Activated B cell treated with CpG ODN at 0.5 μM for 24 hours (primary cell): ENCODE measurements at regions of chr1 and their contacts with region 1.

Region 1: DNA sequence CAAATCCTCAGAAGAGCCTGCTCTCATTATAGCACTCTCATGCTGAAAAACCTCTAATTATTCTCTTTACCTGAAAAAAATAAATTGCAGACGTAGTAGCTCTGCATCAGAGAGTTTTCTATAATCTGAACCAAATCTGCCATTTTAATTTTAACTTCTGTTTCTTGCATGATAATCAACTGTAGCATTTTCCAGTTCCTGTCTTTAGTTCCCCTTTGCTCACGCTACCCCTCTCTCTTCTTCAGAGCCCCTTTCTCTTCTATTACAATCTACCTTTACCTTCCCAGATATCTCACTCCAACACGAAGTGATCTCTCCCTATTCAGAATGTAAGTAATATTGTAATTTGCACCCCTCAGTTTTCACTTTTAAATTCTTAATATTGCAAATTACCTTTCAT is 31.4 kb downstream of the FMO1 start:
- DNase-seq: no peak
- ATAC-seq: peak; percentile 42
- H3K4me3 Mint-ChIP-seq: peak overlapping the region; percentile 61
- H3K27ac Mint-ChIP-seq: peak overlapping the region; percentile 77
- H3K4me1 Mint-ChIP-seq: peaks cover 42% of the 10 kb centered on the region
- H3K27me3 Mint-ChIP-seq: peaks cover 2% of the 10 kb centered on the region
- CTCF ChIP-seq: no peak

Region 2: DNA sequence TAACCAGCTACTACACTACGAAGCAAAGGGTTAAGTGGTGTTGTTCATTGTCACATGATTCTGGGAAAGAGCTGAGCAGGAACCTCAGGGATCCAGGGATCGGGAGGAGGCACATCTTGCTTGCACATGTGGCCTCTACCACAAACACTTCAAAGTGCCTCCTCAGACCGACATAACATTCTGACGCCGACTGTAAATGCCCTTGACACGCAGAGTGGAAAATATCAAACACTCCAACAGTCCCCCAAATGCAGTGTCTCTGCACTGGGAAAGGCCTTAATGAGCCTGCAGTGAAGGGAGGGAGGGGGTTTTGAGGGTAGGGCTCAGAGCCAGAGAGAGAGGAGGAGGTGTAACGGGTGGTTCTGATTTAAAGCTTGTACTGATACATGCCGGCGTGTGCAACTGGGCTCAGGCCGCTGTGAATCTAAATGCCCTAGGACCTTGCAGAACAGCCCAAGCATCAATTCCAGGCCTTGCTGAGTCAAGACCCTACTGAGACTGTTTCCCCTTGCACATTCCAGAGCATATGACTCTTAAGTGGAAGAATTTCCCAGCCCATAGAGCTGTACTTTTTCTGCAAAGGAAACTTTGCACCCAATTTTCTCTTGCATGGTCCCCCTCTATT is 970.2 kb before region 1 on chr1:
- CTCF ChIA-PET with region 1: no interaction called
- POLR2A ChIA-PET with region 1: no interaction called
- intact Hi-C with region 1: no loop called
- DNase-seq: no peak
- ATAC-seq: no peak
- H3K4me3 Mint-ChIP-seq: no peak overlapping the region
- H3K27ac Mint-ChIP-seq: no peak overlapping the region
- H3K4me1 Mint-ChIP-seq: no peaks in the 10 kb centered on the region
- H3K27me3 Mint-ChIP-seq: peaks cover 2% of the 10 kb centered on the region
- CTCF ChIP-seq: no peak

Region 3: DNA sequence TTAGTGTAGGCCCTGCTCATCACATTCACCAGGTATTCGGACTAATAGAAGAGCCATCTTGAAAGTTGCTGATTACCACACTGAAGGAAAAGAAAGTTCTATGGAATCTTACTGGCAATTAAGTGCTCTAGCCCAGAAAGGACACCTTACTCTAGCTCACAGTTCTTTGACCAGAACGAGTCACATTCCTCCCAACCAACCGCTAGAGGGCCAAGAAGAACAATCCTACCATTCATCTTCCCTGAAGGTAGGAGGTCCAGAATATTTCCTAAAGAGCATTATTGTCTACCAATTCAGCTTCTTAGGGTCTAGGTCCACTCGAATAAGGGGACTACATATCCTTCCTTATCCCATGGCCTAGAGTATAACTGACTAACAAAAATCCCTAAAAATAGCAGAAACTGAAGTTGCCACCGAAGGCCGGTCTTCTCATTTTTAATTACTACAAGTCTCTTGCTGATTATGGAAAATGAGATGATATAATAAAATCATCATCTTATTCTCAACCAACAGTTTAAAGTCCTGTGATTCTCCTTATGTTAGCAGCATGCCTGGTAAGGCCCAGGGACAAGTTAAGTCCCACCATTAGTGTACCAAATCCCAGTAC is 34.1 kb before region 1 on chr1:
- CTCF ChIA-PET with region 1: interaction called, 4 read pairs
- POLR2A ChIA-PET with region 1: interaction called, 3 read pairs
- intact Hi-C with region 1: loop called (anchors 2 kb)
- DNase-seq: no peak
- ATAC-seq: peak; percentile 37
- H3K4me3 Mint-ChIP-seq: no peak overlapping the region
- H3K27ac Mint-ChIP-seq: no peak overlapping the region
- H3K4me1 Mint-ChIP-seq: no peaks in the 10 kb centered on the region
- H3K27me3 Mint-ChIP-seq: peaks cover 4% of the 10 kb centered on the region
- CTCF ChIP-seq: no peak